Ascending aorta (tissue), 2 donors: ENCODE measurements at regions of chr1 and their contacts with region 1.

Region 1: DNA sequence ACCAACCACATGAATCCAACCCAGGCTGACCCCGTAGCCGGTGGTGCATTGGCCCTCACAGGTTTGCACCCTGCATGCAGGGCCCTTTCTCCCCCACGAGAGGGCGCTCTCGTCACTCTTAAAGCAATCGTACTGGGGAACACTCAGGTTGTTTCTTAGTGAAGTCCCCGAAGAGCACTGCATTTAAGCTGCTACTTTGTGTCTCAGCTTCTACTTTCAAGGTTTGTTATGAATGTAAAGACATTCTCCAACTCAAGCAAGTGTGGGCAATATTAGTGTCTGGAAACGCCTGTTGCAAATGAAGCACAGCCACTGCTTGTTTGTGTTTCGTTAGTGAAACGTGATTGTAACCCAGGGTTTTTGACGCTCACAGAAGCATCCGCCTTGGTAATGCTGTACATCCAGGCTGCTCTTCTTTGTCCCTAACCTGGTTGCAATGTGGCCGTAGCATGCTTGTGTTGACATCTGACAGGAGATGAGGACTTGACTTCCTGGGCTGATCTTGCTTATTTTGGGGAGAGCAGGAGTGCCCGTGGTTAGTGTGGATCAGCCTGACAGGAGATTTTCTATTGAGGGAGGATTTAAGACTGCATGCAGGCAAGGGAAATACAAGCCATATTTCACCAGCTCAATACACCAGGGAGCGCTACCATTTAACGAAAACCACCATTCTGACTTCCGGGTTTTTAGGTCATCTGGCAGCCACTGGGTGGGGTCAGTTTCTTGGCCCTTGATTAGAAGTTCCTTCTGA is 79.8 kb downstream of the ST6GALNAC3 start:
- DNase-seq: peak; percentile 43 to 80
- H3K4me3 ChIP-seq: peak overlapping the region; percentile 28 to 61
- H3K27ac ChIP-seq: peak overlapping the region in 1 of 2 donors; percentile 31
- H3K4me1 ChIP-seq: peaks cover 0 to 4% of the 10 kb centered on the region in 2 donors
- H3K27me3 ChIP-seq: no peaks in the 10 kb centered on the region
- CTCF ChIP-seq: peak; percentile 68 to 97 (median 94)

Region 2: DNA sequence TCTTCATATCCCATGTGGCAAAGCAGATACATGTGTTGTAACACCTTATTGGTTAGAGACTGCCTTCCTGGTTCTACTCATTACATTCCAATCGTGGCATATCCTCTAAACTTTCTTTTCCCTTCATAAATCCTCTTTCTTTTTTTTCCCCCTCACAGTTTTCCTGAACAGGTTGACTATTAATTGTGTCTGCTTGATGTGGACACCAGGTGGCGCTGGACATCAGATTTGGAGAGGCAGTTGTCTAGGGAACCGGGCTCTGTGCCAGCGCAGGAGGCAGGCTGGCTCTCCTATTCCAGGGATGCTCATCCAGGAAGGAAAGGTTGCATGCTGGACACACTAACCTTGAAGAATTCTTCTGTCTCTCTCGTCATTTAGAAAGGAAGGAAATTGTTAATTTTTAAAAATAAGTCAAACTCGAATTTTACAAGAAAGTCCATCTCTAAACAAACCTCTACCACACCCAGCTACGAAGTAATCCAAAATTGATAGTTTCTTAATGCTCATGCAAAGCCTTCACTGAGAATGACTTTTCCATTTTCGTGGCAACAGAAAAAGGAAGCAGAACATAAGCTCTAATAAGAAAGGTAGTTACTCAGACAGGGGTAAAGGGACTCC is 162.8 kb before region 1 on chr1:
- intact Hi-C with region 1: loop called (anchors 5 kb)
- DNase-seq: peak; percentile 22 to 87
- H3K4me3 ChIP-seq: no peak overlapping the region
- H3K27ac ChIP-seq: no peak overlapping the region
- H3K4me1 ChIP-seq: no peaks in the 10 kb centered on the region
- H3K27me3 ChIP-seq: no peaks in the 10 kb centered on the region
- CTCF ChIP-seq: peak; percentile 56 to 77 (median 61)

Region 3: GRCh38 chr1:77126307-77126706 is 971.9 kb after region 1 on chr1:
- intact Hi-C with region 1: loop called (anchors 5 kb)
- DNase-seq: no peak
- H3K4me3 ChIP-seq: no peak overlapping the region
- H3K27ac ChIP-seq: no peak overlapping the region
- H3K4me1 ChIP-seq: no peaks in the 10 kb centered on the region
- H3K27me3 ChIP-seq: no peaks in the 10 kb centered on the region
- CTCF ChIP-seq: peak; percentile 19 to 66 (median 44)

Region 4: DNA sequence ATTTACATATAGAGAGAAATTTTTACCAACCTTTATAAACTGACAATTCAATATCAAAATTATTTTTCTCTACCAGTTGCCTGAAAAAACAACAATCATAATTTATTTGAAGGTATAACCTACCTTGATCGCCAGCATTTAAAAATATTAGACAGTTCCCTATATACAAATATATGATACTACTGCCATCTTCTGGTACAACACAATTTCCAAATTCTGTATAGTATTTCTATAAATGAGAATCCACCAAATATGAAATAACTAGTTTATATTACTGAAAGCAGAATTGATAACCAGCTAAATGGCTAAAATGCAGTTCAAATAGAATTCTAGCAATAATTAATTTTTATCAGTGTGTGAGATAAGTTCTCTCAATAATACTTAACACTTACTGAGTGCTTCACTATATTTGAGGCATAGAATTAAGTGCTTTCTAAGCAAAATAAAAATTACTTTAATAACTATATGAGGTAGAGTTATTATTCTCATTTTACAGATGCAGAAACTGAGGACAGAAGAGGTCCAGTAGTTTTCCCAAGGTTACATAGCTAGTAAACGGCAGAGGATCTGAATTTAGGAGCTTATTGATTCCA is 989.2 kb after region 1 on chr1:
- intact Hi-C with region 1: loop called (anchors 5 kb)
- DNase-seq: no peak
- H3K4me3 ChIP-seq: no peak overlapping the region
- H3K27ac ChIP-seq: no peak overlapping the region
- H3K4me1 ChIP-seq: no peaks in the 10 kb centered on the region
- H3K27me3 ChIP-seq: no peaks in the 10 kb centered on the region
- CTCF ChIP-seq: peak in 1 of 3 experiments; percentile 22